HEK293 (cell line): ENCODE measurements at regions of chr13 and their contacts with region 1.

Region 1: DNA sequence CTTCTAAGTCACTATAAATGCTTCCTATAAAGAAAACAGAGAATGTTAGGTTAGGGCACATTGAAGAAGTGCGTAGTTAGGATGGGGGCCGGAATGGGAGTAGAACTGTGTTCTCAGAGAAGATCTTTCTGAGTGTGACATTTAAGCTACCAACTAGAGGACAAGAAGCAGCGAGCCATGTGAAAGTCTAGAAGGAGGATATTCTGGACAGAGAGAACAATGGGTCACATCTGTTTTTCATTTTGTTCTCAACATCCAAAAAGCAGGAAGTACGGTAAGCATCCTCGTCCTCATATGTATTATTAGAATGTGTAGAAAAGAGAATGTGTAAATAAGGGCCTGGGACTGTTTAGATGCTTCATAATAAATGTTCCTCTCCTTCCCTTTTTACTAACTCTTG is 44.5 kb upstream of the PARP4 start:
- H3K4me3 ChIP-seq: no peak overlapping the region
- H3K27ac ChIP-seq: no peak overlapping the region
- H3K4me1 ChIP-seq: no peaks in the 10 kb centered on the region
- CTCF ChIP-seq: no peak

Region 2: DNA sequence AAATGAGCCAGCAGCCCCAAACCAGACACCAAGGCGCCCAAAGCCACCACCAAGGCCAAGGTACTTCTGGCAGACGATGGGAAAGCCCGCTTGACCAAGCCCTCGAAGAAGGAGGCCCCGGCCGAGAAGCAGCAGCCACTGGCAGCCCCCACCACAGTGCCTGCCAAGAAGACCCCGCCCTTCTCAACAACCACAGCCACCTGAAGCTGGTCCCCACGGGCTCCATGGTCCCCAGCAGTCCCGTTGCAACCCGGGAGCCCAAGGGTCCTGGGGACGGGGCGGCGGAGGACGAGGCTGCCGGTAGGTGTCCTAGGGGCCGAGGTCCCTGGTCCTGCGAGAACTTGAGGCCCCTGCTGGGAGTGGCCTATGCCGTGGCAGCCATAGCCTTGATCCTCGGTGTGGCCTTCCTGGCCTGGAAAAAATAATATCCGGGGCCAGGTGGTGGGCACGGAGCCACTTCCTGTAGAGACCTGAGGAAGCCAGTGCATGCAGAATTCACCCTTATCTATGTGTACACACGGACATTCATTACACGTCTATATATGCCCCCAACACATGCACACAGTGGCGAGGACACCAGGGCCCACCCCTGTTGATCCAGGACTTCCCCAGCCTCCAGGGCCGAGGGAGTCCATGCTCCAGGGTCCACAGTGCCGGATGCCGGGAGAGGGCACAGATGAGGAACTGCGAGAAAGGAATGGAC is 233.9 kb before region 1 on chr13:
- CTCF ChIA-PET with region 1: interaction called, 10 read pairs
- POLR2A ChIA-PET with region 1: no interaction called
- H3K4me3 ChIP-seq: no peak overlapping the region
- H3K27ac ChIP-seq: no peak overlapping the region
- H3K4me1 ChIP-seq: no peaks in the 10 kb centered on the region
- CTCF ChIP-seq: no peak

Region 3: GRCh38 chr13:24541127-24541475 is 16.0 kb before region 1 on chr13:
- CTCF ChIA-PET with region 1: no interaction called
- POLR2A ChIA-PET with region 1: no interaction called
- H3K4me3 ChIP-seq: no peak overlapping the region
- H3K27ac ChIP-seq: no peak overlapping the region
- H3K4me1 ChIP-seq: no peaks in the 10 kb centered on the region
- CTCF ChIP-seq: no peak

Region 4: GRCh38 chr13:24727731-24728601 is 170.9 kb after region 1 on chr13:
- CTCF ChIA-PET with region 1: no interaction called
- POLR2A ChIA-PET with region 1: no interaction called
- H3K4me3 ChIP-seq: no peak overlapping the region
- H3K27ac ChIP-seq: no peak overlapping the region
- H3K4me1 ChIP-seq: no peaks in the 10 kb centered on the region
- CTCF ChIP-seq: peak; percentile 81